ENCODE measurements at regions of chr14 and their contacts with region 1.

Region 1: GRCh38 chr14:49862089-49862673 is 9.6 kb upstream of the NEMF start:
- DNase-seq: peak; percentile 74 to 94 (median 84)
- ATAC-seq: peak; percentile 33
- H3K4me3 ChIP-seq: peak overlapping the region; percentile 78
- H3K4me3 Mint-ChIP-seq: no peak overlapping the region
- H3K27ac ChIP-seq: peak overlapping the region; percentile 98
- H3K27ac Mint-ChIP-seq: no peak overlapping the region
- H3K4me1 ChIP-seq: peaks cover 43% of the 10 kb centered on the region
- H3K4me1 Mint-ChIP-seq: peaks cover 13% of the 10 kb centered on the region
- H3K27me3 ChIP-seq: no peaks in the 10 kb centered on the region
- H3K27me3 Mint-ChIP-seq: peaks cover 15% of the 10 kb centered on the region
- CTCF ChIP-seq: peak; percentile 100

Region 2: GRCh38 chr14:49633640-49634546 is 228.3 kb before region 1 on chr14:
- CTCF ChIA-PET with region 1: interaction called, 4 read pairs
- POLR2A ChIA-PET with region 1: interaction called, 26 read pairs
- intact Hi-C with region 1: no loop called
- DNase-seq: peak; percentile 89 to 97 (median 93)
- ATAC-seq: peak; percentile 82
- H3K4me3 ChIP-seq: peak overlapping the region; percentile 83
- H3K4me3 Mint-ChIP-seq: peak overlapping the region; percentile 98
- H3K27ac ChIP-seq: peak overlapping the region; percentile 97 to 99
- H3K27ac Mint-ChIP-seq: peak overlapping the region; percentile 83
- H3K4me1 ChIP-seq: peaks cover 51% of the 10 kb centered on the region
- H3K4me1 Mint-ChIP-seq: peaks cover 46% of the 10 kb centered on the region
- H3K27me3 ChIP-seq: no peaks in the 10 kb centered on the region
- H3K27me3 Mint-ChIP-seq: no peaks in the 10 kb centered on the region
- CTCF ChIP-seq: peak; percentile 86

Region 3: GRCh38 chr14:49940808-49941421 is 78.7 kb after region 1 on chr14:
- CTCF ChIA-PET with region 1: interaction called, 5 read pairs
- POLR2A ChIA-PET with region 1: interaction called, 25 read pairs
- intact Hi-C with region 1: no loop called
- DNase-seq: peak in 6 of 14 experiments; percentile 10 to 75 (median 34)
- ATAC-seq: peak; percentile 68
- H3K4me3 ChIP-seq: peak overlapping the region; percentile 19
- H3K4me3 Mint-ChIP-seq: peak overlapping the region; percentile 69
- H3K27ac ChIP-seq: peak overlapping the region in 1 of 2 donors; percentile 38
- H3K27ac Mint-ChIP-seq: peak overlapping the region; percentile 57
- H3K4me1 ChIP-seq: peaks cover 47% of the 10 kb centered on the region
- H3K4me1 Mint-ChIP-seq: peaks cover 68% of the 10 kb centered on the region
- H3K27me3 ChIP-seq: no peaks in the 10 kb centered on the region
- H3K27me3 Mint-ChIP-seq: no peaks in the 10 kb centered on the region
- CTCF ChIP-seq: no peak

Region 4: GRCh38 chr14:50003213-50004031 is 141.2 kb after region 1 on chr14:
- CTCF ChIA-PET with region 1: interaction called, 44 read pairs
- POLR2A ChIA-PET with region 1: interaction called, 134 read pairs
- intact Hi-C with region 1: loop called in 1 of 2 experiments (anchors 2 kb)
- DNase-seq: peak; percentile 41 to 89 (median 70)
- ATAC-seq: peak; percentile 13
- H3K4me3 ChIP-seq: peak overlapping the region; percentile 61
- H3K4me3 Mint-ChIP-seq: peak overlapping the region; percentile 91
- H3K27ac ChIP-seq: peak overlapping the region; percentile 95 to 96
- H3K27ac Mint-ChIP-seq: peak overlapping the region; percentile 95
- H3K4me1 ChIP-seq: peaks cover 65% of the 10 kb centered on the region
- H3K4me1 Mint-ChIP-seq: peaks cover 59% of the 10 kb centered on the region
- H3K27me3 ChIP-seq: no peaks in the 10 kb centered on the region
- H3K27me3 Mint-ChIP-seq: no peaks in the 10 kb centered on the region
- CTCF ChIP-seq: peak; percentile 26

Region 5: GRCh38 chr14:50085570-50086320 is 223.6 kb after region 1 on chr14:
- CTCF ChIA-PET with region 1: interaction called, 23 read pairs
- POLR2A ChIA-PET with region 1: interaction called, 63 read pairs
- intact Hi-C with region 1: loop called in 1 of 2 experiments (anchors 1 kb)
- DNase-seq: peak in 4 of 14 experiments; percentile 28 to 65 (median 55)
- ATAC-seq: no peak
- H3K4me3 ChIP-seq: no peak overlapping the region
- H3K4me3 Mint-ChIP-seq: peak overlapping the region; percentile 65
- H3K27ac ChIP-seq: peak overlapping the region; percentile 96 to 97
- H3K27ac Mint-ChIP-seq: peak overlapping the region; percentile 93
- H3K4me1 ChIP-seq: peaks cover 80% of the 10 kb centered on the region
- H3K4me1 Mint-ChIP-seq: peaks cover 89% of the 10 kb centered on the region
- H3K27me3 ChIP-seq: no peaks in the 10 kb centered on the region
- H3K27me3 Mint-ChIP-seq: no peaks in the 10 kb centered on the region
- CTCF ChIP-seq: no peak

Region 6: GRCh38 chr14:50231475-50232275 is 369.5 kb after region 1 on chr14 and contains the start of gene SOS2:
- CTCF ChIA-PET with region 1: interaction called, 3 read pairs
- POLR2A ChIA-PET with region 1: interaction called, 9 read pairs
- intact Hi-C with region 1: loop called (anchors 2 to 5 kb)
- DNase-seq: peak; percentile 66 to 91 (median 81)
- ATAC-seq: peak; percentile 80
- H3K4me3 ChIP-seq: peak within 1 kb of the TSS; percentile 85
- H3K4me3 Mint-ChIP-seq: peak within 1 kb of the TSS; percentile 91
- H3K27ac ChIP-seq: peak within 1 kb of the TSS; percentile 83 to 86
- H3K27ac Mint-ChIP-seq: peak within 1 kb of the TSS; percentile 92
- H3K4me1 ChIP-seq: peaks cover 24% of the 10 kb centered on the region
- H3K4me1 Mint-ChIP-seq: peaks cover 57% of the 10 kb centered on the region
- H3K27me3 ChIP-seq: no peaks in the 10 kb centered on the region
- H3K27me3 Mint-ChIP-seq: no peaks in the 10 kb centered on the region
- CTCF ChIP-seq: no peak
- total RNA-seq, gene SOS2: 53.8 to 56.7 TPM